ENCODE measurements at regions of chr3 and their contacts with region 1.

Region 1: DNA sequence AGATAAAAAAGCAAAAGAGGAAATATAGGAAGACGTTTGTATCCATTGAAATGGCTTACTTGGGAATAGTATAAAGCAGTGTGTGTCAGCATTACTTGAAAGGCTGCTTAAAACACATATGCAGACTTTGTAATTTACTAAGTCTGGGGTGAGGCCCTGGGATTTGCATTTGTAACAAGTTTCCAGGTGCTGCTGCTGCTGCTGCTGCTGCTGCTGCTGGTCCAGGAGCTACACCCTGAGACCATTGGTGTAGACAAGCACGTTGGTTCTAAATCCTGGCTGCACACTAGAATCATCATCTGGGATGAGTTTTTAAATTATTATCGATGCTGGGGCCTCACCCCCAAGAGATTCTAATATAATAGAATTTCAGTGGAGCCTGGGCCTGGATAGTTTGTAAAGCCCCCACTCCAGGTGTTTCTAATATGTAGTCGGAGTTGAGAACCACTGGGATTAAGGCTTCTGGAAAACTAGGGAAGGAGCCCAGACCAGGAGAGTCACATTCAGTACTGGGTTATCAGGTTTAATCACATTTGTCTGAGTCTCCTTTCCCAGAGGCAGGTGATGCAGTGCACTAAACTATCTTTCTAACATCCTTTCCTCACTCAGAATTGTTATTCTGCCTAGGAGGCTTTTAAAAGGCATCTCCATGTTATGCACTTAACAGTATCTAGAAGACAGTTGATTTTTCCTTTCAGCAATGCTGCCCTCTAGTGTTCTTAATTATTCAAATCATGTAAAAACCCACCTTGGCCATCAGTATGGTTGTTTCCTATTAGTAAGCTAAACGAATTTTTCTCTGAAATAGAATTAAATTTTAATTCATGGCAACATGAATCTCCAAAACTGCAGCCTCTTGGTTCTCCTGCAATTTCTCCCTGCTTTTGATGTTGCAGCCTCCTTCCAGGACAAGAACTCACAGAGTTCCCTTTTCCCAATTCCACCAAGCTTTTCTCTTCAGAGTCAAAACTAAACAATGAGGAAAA is 45.4 kb downstream of the SSR3 start:
- DNase-seq: no peak
- H3K4me3 ChIP-seq: no peak overlapping the region
- H3K27ac ChIP-seq: no peak overlapping the region
- H3K4me1 ChIP-seq: no peaks in the 10 kb centered on the region
- H3K27me3 ChIP-seq: no peaks in the 10 kb centered on the region
- CTCF ChIP-seq: peak; percentile 27 to 61 (median 36)
- POLR2A ChIP-seq: no peak

Region 2: DNA sequence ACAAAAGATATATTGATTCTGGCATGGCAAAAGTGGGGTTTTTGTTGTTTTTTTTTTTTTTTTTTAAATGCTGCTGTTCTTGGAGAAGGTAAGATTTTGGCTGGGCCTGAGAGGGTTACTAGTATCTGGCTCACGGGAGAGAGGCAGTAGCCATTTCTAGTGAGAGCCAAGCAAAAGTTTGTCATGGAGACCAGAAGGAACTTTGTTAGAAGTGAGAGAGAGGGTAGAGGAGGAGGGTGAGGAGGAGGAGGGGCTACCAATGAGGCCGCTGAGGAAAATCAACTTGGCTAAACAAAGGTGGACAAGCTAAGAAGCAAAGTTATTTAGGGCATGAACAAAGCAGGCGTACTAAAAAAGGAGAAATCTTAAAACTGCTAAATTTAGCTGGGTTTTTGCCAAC is 1167.1 kb before region 1 on chr3:
- intact Hi-C with region 1: no loop called
- DNase-seq: no peak
- H3K4me3 ChIP-seq: no peak overlapping the region
- H3K27ac ChIP-seq: no peak overlapping the region
- H3K4me1 ChIP-seq: no peaks in the 10 kb centered on the region
- H3K27me3 ChIP-seq: no peaks in the 10 kb centered on the region
- CTCF ChIP-seq: no peak
- POLR2A ChIP-seq: no peak

Region 3: GRCh38 chr3:156151824-156152428 is 357.6 kb before region 1 on chr3:
- intact Hi-C with region 1: loop called (anchors 10 kb)
- DNase-seq: peak; percentile 86
- H3K4me3 ChIP-seq: no peak overlapping the region
- H3K27ac ChIP-seq: no peak overlapping the region
- H3K4me1 ChIP-seq: peaks cover 19% of the 10 kb centered on the region
- H3K27me3 ChIP-seq: no peaks in the 10 kb centered on the region
- CTCF ChIP-seq: peak; percentile 50 to 76 (median 69)
- POLR2A ChIP-seq: no peak

Region 4: GRCh38 chr3:156285626-156286025 is 223.9 kb before region 1 on chr3:
- intact Hi-C with region 1: no loop called
- DNase-seq: no peak
- H3K4me3 ChIP-seq: no peak overlapping the region
- H3K27ac ChIP-seq: no peak overlapping the region
- H3K4me1 ChIP-seq: no peaks in the 10 kb centered on the region
- H3K27me3 ChIP-seq: no peaks in the 10 kb centered on the region
- CTCF ChIP-seq: no peak
- POLR2A ChIP-seq: no peak

Region 5: DNA sequence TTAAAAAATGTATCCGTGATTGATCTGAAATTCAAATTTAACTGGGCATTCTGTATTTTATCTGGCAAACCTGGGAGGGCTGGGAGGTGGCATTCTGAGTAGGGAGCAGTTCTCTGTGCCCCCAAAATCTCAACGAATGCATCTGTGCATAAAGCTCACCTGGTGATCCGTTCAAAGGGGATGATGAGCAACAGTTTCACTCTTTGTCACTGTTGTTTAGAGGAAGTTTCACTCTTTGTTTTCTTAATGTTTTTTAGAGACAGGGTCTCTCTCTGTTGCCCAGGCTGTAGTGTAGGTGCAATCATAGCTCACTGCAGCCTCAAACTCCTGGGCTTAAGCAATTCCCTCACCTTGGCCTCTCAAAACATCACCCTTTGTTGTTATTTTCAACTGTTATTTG is 141.3 kb before region 1 on chr3:
- intact Hi-C with region 1: no loop called
- DNase-seq: no peak
- H3K4me3 ChIP-seq: no peak overlapping the region
- H3K27ac ChIP-seq: no peak overlapping the region
- H3K4me1 ChIP-seq: no peaks in the 10 kb centered on the region
- H3K27me3 ChIP-seq: no peaks in the 10 kb centered on the region
- CTCF ChIP-seq: no peak
- POLR2A ChIP-seq: no peak

Region 6: GRCh38 chr3:156681002-156681401 is 171.5 kb after region 1 on chr3:
- intact Hi-C with region 1: no loop called
- DNase-seq: no peak
- H3K4me3 ChIP-seq: no peak overlapping the region
- H3K27ac ChIP-seq: no peak overlapping the region
- H3K4me1 ChIP-seq: peaks cover 25% of the 10 kb centered on the region
- H3K27me3 ChIP-seq: no peaks in the 10 kb centered on the region
- CTCF ChIP-seq: no peak
- POLR2A ChIP-seq: no peak